ENCODE measurements at regions of chr7 and their contacts with region 1.

Region 1: GRCh38 chr7:140175221-140176121 is 1.3 kb downstream of the KDM7A start:
- DNase-seq: peak; percentile 93 to 94
- ATAC-seq: peak; percentile 77 to 79
- H3K4me3 ChIP-seq: peak overlapping the region; percentile 71 to 95 (median 80)
- H3K27ac ChIP-seq: peak overlapping the region; percentile 94 to 99 (median 98)
- H3K4me1 ChIP-seq: peaks cover 38 to 40% of the 10 kb centered on the region in 2 donors
- H3K27me3 ChIP-seq: no peaks in the 10 kb centered on the region
- CTCF ChIP-seq: peak; percentile 78 to 92 (median 86)
- POLR2A ChIP-seq: peak; percentile 97 to 98

Region 2: DNA sequence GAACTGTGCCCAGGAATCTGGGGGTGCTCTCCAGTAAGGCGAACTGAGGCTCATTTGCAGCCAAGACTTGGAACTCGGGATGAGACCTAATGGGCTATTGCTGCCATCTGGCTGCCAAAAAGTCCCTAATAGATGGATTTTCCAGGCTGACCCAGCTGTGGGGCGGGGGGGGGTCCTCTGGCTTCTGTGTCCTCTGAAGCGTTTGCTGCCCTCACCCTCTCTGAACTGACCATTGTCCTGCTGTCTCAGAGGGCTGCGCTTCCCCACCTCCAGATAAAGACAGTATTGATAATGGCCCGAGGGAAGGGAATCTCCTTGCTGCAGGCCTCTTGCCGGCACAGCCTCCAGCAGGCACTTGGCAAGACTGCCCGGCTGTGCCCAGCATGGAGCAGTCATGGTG is 605.4 kb before region 1 on chr7:
- in situ Hi-C with region 1: no loop called
- intact Hi-C with region 1: loop called (anchors 10 kb)
- DNase-seq: no peak
- ATAC-seq: no peak
- H3K4me3 ChIP-seq: no peak overlapping the region
- H3K27ac ChIP-seq: peak overlapping the region in 3 of 4 donors; percentile 3 to 38 (median 7)
- H3K4me1 ChIP-seq: peaks cover 16 to 19% of the 10 kb centered on the region in 2 donors
- H3K27me3 ChIP-seq: no peaks in the 10 kb centered on the region
- CTCF ChIP-seq: peak in 2 of 5 experiments; percentile 11 to 30
- POLR2A ChIP-seq: no peak

Region 3: DNA sequence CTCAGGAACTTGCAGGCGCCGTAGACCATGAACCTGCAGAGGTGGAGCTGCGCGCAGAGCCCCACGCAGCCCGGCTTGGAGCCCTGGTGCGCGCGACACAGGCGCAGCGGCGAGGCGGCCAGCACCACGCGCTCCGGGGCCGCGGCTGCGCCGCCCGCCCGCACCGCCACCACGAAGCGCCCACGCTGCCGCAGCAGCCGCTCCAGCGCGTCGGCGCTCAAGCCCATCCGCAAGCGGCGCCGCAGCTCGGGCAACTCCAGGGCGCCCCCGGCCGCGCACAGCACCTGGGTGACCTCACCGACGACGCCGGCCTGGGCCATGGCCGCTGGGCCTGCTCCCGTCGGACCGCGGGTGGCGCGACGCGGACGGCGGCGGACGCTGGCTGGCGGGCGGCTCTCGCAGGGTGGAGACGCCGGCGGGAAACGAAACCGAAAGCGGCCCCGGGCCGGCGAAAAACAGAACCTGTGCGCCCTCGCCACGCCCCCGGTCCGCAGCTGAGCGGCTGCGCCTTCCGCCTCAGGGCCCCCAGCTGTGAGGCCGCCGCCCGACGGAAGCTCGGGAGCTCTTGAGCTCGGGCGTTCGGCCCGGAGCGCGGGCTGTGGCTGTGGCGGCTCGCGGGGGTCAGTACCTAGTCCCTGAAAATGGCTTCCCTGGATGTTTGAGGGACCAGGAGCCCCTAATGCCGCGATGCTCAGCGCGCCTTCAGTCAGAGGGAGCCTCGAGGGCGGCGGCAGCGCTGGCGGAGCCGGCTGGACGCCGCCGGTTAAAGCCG is 112.8 kb before region 1 on chr7 and contains the start of gene PARP12:
- in situ Hi-C with region 1: no loop called
- intact Hi-C with region 1: loop called (anchors 5 kb)
- DNase-seq: peak; percentile 69 to 80
- ATAC-seq: peak; percentile 73 to 84
- H3K4me3 ChIP-seq: peak within 1 kb of the TSS; percentile 62 to 84 (median 72)
- H3K27ac ChIP-seq: peak within 1 kb of the TSS; percentile 71 to 80 (median 78)
- H3K4me1 ChIP-seq: peaks cover 0 to 6% of the 10 kb centered on the region in 2 donors
- H3K27me3 ChIP-seq: no peaks in the 10 kb centered on the region
- CTCF ChIP-seq: no peak
- POLR2A ChIP-seq: peak; percentile 15 to 43
- total RNA-seq, gene PARP12: 4.3 to 12.7 (median 4.9) TPM

Region 4: DNA sequence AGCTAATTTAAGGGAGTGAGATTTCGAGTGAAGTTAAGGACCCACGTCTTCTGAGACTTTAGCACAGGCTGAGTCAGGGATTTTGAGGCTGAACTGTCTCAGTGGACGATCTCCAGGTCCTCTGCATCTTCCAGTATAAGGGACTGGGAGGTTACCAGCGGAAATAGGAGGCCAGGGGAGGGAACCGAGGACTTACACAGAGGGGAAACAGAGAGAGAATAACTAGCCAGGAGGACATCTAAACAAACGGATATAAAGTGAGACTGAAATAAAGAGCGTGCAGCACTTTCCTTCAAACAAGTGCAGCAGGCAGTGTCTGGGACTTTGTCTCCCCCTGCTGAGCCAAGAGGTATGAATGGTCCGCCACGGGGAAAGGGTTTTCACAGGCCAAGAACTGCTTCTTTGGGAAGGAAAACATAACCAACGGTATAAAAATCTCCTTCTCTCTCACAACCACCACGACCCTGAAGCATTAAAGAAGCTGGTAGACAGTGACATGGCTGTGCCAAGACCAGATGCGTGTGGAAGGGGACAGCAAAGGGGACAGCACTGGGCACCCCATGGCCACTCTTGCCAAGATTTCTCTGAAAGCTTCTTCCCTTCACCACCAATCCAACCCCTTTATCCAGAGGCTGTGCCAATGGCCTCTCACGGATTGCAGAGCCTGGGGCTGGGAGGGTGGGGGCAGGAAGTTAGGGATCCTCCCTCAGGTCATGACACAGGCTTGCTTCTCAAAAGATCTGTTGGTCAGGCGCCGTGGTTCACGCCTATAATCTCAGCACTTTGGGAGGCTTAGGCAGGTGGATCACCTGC is 150.9 kb after region 1 on chr7:
- in situ Hi-C with region 1: no loop called
- intact Hi-C with region 1: loop called (anchors 2 kb)
- DNase-seq: peak; percentile 42 to 43
- ATAC-seq: peak; percentile 82 to 87
- H3K4me3 ChIP-seq: peak overlapping the region in 1 of 4 donors; percentile 20
- H3K27ac ChIP-seq: no peak overlapping the region
- H3K4me1 ChIP-seq: peaks cover 0 to 3% of the 10 kb centered on the region in 2 donors
- H3K27me3 ChIP-seq: no peaks in the 10 kb centered on the region
- CTCF ChIP-seq: peak in 4 of 5 experiments; percentile 33 to 63 (median 51)
- POLR2A ChIP-seq: no peak

Region 5: DNA sequence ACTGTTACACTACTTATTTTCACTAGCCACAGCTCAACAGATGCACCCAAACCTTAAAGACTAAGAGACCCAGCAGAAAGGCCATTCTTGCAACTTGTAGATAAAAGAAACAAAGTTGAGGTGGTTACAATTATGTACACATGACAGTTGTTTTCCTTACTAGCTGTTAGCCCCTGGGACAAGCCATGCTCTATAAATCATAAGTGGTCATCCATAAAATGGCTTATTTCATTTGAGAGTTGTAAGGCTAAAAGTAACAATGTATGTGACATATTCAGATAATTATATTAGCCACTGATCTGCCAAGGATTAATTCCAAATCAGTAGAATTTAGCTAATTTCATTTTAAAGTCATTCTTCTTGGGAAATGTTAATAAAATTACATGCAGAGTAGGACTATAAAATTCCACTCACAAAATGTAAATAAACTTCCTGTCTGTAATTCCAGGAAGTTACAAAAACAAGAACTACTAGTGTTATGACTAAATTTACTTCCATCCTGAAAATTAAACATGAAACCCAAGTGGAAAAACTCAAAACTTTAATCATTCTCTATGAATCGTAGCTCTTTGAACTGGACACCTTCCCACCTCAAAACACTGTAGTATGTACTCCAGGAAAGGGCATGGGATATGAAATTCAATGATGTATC is 209.5 kb after region 1 on chr7:
- in situ Hi-C with region 1: no loop called
- intact Hi-C with region 1: no loop called
- DNase-seq: no peak
- ATAC-seq: no peak
- H3K4me3 ChIP-seq: no peak overlapping the region
- H3K27ac ChIP-seq: no peak overlapping the region
- H3K4me1 ChIP-seq: peaks cover 3 to 5% of the 10 kb centered on the region in 2 donors
- H3K27me3 ChIP-seq: no peaks in the 10 kb centered on the region
- CTCF ChIP-seq: no peak
- POLR2A ChIP-seq: no peak

Region 6: GRCh38 chr7:140653319-140654108 is 478.0 kb after region 1 on chr7:
- in situ Hi-C with region 1: no loop called
- intact Hi-C with region 1: loop called (anchors 10 kb)
- DNase-seq: peak; percentile 46 to 48
- ATAC-seq: peak; percentile 71 to 75
- H3K4me3 ChIP-seq: no peak overlapping the region
- H3K27ac ChIP-seq: peak overlapping the region in 2 of 4 donors; percentile 27 to 35
- H3K4me1 ChIP-seq: peaks cover 23% of the 10 kb centered on the region in 2 donors
- H3K27me3 ChIP-seq: no peaks in the 10 kb centered on the region
- CTCF ChIP-seq: peak; percentile 81 to 94 (median 88)
- POLR2A ChIP-seq: no peak